ENCODE measurements at regions of chr11 and their contacts with region 1.

Region 1: DNA sequence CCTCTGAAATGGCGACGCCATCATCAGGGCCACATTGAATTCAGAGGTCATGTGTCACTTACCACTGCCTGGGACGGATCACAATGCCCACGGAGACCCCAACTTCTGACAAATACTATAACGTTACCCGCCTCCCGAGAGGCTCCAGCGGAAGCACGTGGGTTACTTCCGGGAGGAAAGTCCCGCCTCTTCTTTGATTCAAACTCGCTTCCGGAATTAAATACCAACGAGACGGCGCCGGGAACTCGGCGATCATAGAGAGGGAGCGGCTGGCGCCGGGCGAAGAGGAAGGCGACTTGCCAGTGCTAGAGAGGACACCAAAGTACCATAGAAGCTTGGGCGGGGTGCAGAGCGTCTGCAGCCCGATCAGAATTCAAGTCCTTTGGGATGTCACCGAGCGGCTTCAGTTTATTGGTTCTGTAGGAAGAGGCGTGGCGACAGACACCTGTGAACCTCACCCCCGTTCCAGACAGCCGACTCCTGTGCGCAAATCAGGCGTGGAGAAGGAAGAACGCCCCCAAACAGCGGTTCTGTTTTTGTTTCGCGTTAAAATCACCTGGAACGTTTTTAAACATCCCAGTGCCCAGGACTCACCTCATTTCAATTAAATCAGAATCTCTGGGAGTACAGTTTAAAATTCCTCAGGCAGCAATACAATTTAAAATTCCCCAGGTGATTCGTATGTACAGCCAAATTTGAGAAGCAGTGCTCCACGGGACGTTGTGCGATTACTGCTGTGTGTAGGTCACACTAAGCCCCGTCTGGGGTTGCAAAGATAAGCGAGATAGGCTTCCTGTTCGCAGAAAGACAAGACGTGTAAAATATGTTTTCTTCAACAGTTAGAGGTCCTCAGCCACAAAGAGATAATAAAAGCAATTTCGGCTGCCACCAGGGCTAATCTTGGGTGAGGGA is at the start of gene TIMM10:
- DNase-seq: peak; percentile 86
- H3K4me3 ChIP-seq: peak within 1 kb of the TSS; percentile 99
- H3K27ac ChIP-seq: no peak within 1 kb of the TSS
- H3K27me3 ChIP-seq: peaks cover 5% of the 10 kb centered on the region
- CTCF ChIP-seq: no peak
- polyA plus RNA-seq, gene TIMM10: 76.6 and 82.8 TPM in 2 replicates

Region 2: GRCh38 chr11:57353036-57353435 is 177.8 kb before region 1 on chr11:
- CTCF ChIA-PET with region 1: interaction called, 18 read pairs
- POLR2A ChIA-PET with region 1: no interaction called
- DNase-seq: no peak
- H3K4me3 ChIP-seq: no peak overlapping the region
- H3K27ac ChIP-seq: no peak overlapping the region
- H3K27me3 ChIP-seq: peaks cover 17% of the 10 kb centered on the region
- CTCF ChIP-seq: no peak

Region 3: GRCh38 chr11:57368106-57368844 is 162.6 kb before region 1 on chr11:
- CTCF ChIA-PET with region 1: no interaction called
- POLR2A ChIA-PET with region 1: no interaction called
- DNase-seq: no peak
- H3K4me3 ChIP-seq: no peak overlapping the region
- H3K27ac ChIP-seq: no peak overlapping the region
- H3K27me3 ChIP-seq: peaks cover 22% of the 10 kb centered on the region
- CTCF ChIP-seq: no peak

Region 4: DNA sequence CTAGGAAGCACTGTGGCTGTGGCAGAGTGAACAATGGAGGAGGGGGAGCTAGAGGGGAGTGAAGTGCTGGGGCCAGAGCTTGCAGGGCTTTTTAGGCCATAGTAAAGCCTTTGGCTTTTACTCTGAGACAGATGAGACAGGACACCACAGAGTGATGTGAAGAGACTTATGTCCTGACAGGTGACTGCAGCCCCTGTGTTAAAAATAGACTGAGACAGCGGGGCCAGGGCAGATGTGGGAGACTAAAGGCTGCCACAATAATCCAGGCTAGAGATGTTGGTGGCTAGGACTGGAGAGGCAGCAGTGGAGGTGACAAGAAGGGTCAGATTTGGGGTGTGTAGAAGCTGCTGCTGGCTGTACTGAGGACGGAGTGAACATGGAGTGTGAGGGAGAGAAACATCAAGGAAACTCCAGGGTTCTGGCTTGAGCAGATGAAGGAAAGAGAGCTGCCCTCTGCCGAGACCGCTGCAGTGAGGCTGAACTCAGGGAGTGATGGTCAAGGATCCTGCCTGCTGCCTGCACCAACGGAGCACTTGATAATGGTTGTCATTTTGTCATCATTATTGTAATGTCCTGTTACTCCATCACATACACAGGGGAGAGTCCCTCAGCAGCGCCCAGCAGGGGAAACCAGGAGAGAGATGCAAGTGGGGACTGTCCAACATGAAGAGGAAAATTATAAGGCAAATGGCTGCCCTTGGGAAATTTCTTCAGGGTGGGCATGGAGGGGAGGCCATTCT is 42.8 kb before region 1 on chr11:
- CTCF ChIA-PET with region 1: interaction called, 121 read pairs
- POLR2A ChIA-PET with region 1: interaction called, 5 read pairs
- DNase-seq: no peak
- H3K4me3 ChIP-seq: no peak overlapping the region
- H3K27ac ChIP-seq: no peak overlapping the region
- H3K27me3 ChIP-seq: no peaks in the 10 kb centered on the region
- CTCF ChIP-seq: no peak

Region 5: DNA sequence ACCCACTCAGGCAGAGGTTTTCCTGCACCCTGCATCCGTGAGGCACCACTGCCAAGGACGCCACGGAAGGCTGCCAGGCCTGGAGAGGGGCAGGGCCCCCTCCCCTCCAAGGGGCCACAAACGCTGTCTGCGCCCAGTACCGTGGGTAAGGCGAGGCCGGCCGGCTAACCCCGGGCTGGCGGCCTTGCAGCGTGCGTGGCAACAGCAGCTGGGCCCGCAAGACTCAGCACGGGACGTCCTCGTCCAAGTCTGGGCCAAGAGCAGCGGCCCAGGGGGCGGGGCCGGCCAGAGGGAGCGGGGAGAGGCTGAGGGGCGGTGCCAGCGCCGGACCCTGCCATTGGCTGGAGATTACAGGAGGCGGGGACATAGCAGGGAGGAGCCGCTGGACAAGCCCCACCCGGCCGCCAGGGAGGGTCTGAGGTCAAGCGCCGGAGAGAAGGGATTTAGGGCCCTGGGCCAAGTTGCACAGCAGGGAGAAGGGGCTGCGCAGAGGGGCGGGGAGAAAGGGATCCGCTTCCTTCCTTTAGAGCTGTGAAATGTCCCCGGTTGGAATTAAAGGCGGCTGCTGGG is 31.4 kb before region 1 on chr11:
- CTCF ChIA-PET with region 1: interaction called, 121 read pairs
- POLR2A ChIA-PET with region 1: no interaction called
- DNase-seq: peak; percentile 61
- H3K4me3 ChIP-seq: peak overlapping the region; percentile 47
- H3K27ac ChIP-seq: peak overlapping the region; percentile 73
- H3K27me3 ChIP-seq: no peaks in the 10 kb centered on the region
- CTCF ChIP-seq: no peak

Region 6: GRCh38 chr11:57515332-57516060 is 15.4 kb before region 1 on chr11 and contains the start of gene SLC43A1:
- CTCF ChIA-PET with region 1: interaction called, 44 read pairs
- POLR2A ChIA-PET with region 1: no interaction called
- DNase-seq: no peak
- H3K4me3 ChIP-seq: peak within 1 kb of the TSS; percentile 85
- H3K27ac ChIP-seq: peak within 1 kb of the TSS; percentile 57
- H3K27me3 ChIP-seq: no peaks in the 10 kb centered on the region
- CTCF ChIP-seq: no peak
- polyA plus RNA-seq, gene SLC43A1: 14.6 and 17.5 TPM in 2 replicates